Right cardiac atrium (tissue), 5 donors: ENCODE measurements at regions of chr10 and their contacts with region 1.

Region 1: GRCh38 chr10:28984431-28984830 is 304.4 kb upstream of the LYZL1 start:
- DNase-seq: peak; percentile 93 to 96 (median 95)
- ATAC-seq: peak; percentile 97 to 98
- H3K4me3 ChIP-seq: no peak overlapping the region
- H3K27ac ChIP-seq: peak overlapping the region; percentile 50
- H3K4me1 ChIP-seq: peaks cover 7% of the 10 kb centered on the region
- H3K27me3 ChIP-seq: no peaks in the 10 kb centered on the region

Region 2: GRCh38 chr10:28769091-28769604 is 215.3 kb before region 1 on chr10:
- intact Hi-C with region 1: no loop called
- DNase-seq: no peak
- ATAC-seq: no peak
- H3K4me3 ChIP-seq: no peak overlapping the region
- H3K27ac ChIP-seq: no peak overlapping the region
- H3K4me1 ChIP-seq: no peaks in the 10 kb centered on the region
- H3K27me3 ChIP-seq: no peaks in the 10 kb centered on the region

Region 3: DNA sequence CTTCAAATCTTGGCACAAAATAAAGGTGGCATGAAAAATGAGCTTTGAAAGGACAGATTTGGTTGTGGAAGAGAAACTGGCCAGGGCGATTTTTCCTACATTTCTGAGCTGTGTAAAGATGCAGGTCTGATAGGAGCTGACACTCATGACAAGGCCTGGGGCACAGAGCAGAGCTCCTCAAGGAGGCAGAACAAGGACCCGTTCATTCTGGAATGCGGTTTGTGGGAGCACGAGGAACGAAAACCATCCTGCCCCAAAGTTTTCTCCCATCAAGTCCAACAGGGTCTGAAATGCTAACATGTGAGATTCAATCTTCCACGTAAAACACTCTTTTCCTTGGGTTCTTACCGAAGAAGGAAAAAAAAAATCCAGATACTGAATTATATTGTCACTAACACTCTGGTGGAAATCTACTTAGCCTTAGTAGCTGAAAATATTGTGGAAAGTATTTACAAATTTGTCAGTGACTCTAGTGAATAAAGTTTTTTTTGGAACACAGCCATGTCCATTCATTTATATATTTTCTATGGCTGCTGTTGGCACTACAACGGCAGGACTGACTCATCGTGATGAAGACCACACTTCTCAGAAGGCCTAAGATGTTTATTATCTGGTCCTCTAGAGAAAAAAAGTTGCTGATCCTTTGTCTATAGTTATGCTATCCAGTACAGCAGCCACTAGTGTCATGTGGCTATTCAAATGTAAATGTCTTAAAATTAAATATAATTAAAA is 91.4 kb before region 1 on chr10:
- intact Hi-C with region 1: loop called in 1 of 4 experiments (anchors 5 kb)
- DNase-seq: no peak
- ATAC-seq: no peak
- H3K4me3 ChIP-seq: no peak overlapping the region
- H3K27ac ChIP-seq: no peak overlapping the region
- H3K4me1 ChIP-seq: peaks cover 2% of the 10 kb centered on the region
- H3K27me3 ChIP-seq: no peaks in the 10 kb centered on the region